ENCODE measurements at regions of chr6 and their contacts with region 1.

Region 1: DNA sequence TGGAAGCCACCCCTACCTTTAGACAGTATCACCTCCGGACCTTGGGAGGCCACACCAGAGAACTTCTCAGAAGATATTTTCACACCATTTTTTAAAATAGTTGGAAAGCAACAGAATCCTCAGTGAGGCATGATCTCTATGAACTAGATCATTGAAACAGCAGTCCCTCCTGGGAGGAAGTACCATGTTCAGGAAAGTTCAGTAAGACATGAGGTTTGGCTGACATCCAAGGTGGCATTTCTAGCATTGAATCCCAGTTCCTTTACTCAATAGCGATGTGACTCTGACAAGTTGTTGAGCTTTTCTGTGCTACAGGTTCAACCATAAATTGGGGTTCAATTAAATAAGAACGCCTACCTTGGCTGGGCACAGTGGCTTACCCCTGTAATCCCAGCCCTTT is 169.0 kb downstream of the TBC1D7 start:
- DNase-seq: peak; percentile 59 to 75 (median 72)
- H3K4me3 ChIP-seq: peak overlapping the region in 1 of 7 experiments; percentile 24
- H3K27ac ChIP-seq: no peak overlapping the region
- H3K4me1 ChIP-seq: peaks cover 0 to 27% (median 16%) of the 10 kb centered on the region in 4 experiments
- H3K27me3 ChIP-seq: no peaks in the 10 kb centered on the region

Region 2: GRCh38 chr6:12962987-12963386 is 196.3 kb before region 1 on chr6:
- CTCF ChIA-PET with region 1: no interaction called
- POLR2A ChIA-PET with region 1: no interaction called
- DNase-seq: peak in 2 of 3 donors; percentile 71 to 83
- H3K4me3 ChIP-seq: peak overlapping the region in 4 of 7 experiments; percentile 16 to 43 (median 30)
- H3K27ac ChIP-seq: peak overlapping the region in 1 of 2 experiments; percentile 30
- H3K4me1 ChIP-seq: peaks cover 8 to 89% (median 57%) of the 10 kb centered on the region in 4 experiments
- H3K27me3 ChIP-seq: no peaks in the 10 kb centered on the region

Region 3: DNA sequence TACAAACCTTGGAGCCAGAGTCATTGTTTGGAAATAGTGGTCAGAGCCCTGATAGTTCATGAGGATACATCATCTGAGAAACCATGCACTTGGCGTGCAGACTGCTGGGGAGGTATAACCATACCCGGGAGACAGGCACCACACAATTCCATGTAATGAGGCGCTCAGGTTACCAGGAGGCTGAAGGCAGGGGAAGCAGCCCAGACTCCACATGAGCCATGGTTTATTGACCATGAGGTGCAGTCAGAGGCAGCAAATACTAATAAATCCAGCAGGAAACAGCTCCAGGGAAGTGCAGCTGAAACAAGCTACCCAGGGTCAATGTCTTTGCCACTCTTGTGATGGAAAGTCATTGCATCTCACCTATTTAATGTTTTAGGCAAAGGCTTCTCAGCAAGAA is 13.0 kb after region 1 on chr6:
- CTCF ChIA-PET with region 1: interaction called, 10 read pairs
- POLR2A ChIA-PET with region 1: interaction called, 3 read pairs
- DNase-seq: no peak
- H3K4me3 ChIP-seq: no peak overlapping the region
- H3K27ac ChIP-seq: no peak overlapping the region
- H3K4me1 ChIP-seq: peaks cover 0 to 14% (median 6%) of the 10 kb centered on the region in 4 experiments
- H3K27me3 ChIP-seq: no peaks in the 10 kb centered on the region

Region 4: DNA sequence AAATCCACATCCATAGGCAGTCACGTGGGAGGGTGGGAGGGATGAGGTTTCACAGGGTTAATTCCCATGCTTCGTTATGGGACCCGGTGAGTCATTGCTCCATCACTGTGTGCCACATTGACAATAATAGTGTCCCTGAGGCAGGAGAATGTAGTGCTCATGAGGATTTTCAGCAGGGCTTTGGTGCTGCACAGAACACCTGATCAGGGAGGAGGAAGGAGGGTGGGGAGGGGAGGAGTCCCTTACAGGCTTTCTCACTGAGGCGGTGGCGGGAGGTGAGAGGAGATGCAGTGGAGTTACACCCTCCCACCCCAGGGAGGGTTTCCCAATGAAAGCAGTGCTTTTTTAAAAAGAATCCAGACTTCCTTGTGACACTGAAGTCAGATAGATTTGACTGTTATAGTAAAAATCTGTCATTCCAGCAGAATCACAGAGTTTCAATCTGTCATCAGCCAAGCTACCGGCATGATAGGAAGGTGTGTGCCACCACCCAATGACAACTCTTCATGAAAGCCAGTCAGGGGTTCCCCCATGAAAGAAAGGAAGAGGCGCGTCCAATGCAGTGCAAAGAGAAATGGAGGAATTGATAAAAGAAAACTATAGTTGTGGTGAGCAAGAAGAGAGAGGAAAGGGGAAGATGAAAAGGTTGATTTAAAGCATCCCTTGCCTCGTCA is 24.3 kb after region 1 on chr6:
- CTCF ChIA-PET with region 1: no interaction called
- POLR2A ChIA-PET with region 1: no interaction called
- DNase-seq: no peak
- H3K4me3 ChIP-seq: no peak overlapping the region
- H3K27ac ChIP-seq: no peak overlapping the region
- H3K4me1 ChIP-seq: peaks cover 0 to 29% (median 21%) of the 10 kb centered on the region in 4 experiments
- H3K27me3 ChIP-seq: no peaks in the 10 kb centered on the region

Region 5: GRCh38 chr6:13248053-13248452 is 88.8 kb after region 1 on chr6:
- CTCF ChIA-PET with region 1: no interaction called
- POLR2A ChIA-PET with region 1: no interaction called
- DNase-seq: no peak
- H3K4me3 ChIP-seq: no peak overlapping the region
- H3K27ac ChIP-seq: no peak overlapping the region
- H3K4me1 ChIP-seq: peaks cover under 1 to 18% (median 11%) of the 10 kb centered on the region in 4 experiments
- H3K27me3 ChIP-seq: no peaks in the 10 kb centered on the region

Region 6: GRCh38 chr6:13375360-13375878 is 216.1 kb after region 1 on chr6:
- CTCF ChIA-PET with region 1: no interaction called
- POLR2A ChIA-PET with region 1: no interaction called
- DNase-seq: no peak
- H3K4me3 ChIP-seq: no peak overlapping the region
- H3K27ac ChIP-seq: no peak overlapping the region
- H3K4me1 ChIP-seq: peaks cover 0 to 4% (median 1%) of the 10 kb centered on the region in 4 experiments
- H3K27me3 ChIP-seq: no peaks in the 10 kb centered on the region